ENCODE measurements at regions of chr17 and their contacts with region 1.

Region 1: GRCh38 chr17:75430159-75430974 is 24.9 kb upstream of the GRB2 start:
- DNase-seq: peak in 1 of 10 donors; percentile 64

Region 2: DNA sequence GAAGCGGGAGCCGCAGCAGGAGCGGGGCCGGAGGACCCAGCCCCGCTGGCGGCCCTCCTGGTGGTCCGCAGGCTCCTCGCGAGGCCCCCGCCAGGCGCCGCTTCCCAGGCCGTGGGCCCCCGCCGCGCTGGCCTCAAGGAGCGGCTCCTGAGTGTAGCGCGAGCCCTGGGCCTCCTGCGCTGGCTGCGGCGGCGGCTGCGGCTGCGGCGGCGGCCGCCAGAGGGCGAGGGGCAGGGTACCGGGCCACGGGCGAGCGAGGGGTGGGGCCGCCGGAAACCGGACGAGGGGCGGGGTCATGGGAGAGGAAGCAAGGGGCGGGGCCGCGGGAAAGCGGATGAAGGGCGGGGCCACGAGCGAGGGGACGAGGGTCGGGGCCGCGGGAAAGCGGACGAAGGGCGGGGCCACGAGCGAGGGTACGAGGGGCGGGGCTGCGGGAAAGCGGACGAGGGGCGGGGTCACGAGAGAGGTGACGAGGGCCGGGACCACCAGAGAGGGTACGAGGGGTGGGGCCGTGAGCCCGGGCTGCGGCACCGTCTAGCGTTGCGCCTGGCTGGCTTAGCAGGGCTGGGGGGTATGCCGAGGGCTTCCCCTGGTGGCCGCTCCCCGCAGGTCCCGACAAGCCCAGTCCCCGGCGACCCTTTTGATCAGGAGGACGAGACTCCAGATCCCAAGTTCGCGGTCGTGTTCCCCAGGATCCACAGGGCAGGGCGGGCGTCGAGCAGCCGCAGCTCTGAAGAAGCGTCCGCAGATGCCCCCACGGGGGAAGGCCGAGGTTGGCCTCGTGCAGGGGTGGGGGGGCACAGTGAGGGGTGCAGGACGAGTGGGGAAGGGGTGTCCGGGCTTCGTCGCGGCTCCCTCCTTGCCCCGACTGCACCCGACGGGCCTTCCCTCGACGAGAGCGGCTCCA is 158.9 kb after region 1 on chr17:
- intact Hi-C with region 1: loop called (anchors 5 kb)
- DNase-seq: peak; percentile 82 to 98 (median 92)